Ascending aorta (tissue), 2 donors: ENCODE measurements at regions of chr2 and their contacts with region 1.

Region 1: DNA sequence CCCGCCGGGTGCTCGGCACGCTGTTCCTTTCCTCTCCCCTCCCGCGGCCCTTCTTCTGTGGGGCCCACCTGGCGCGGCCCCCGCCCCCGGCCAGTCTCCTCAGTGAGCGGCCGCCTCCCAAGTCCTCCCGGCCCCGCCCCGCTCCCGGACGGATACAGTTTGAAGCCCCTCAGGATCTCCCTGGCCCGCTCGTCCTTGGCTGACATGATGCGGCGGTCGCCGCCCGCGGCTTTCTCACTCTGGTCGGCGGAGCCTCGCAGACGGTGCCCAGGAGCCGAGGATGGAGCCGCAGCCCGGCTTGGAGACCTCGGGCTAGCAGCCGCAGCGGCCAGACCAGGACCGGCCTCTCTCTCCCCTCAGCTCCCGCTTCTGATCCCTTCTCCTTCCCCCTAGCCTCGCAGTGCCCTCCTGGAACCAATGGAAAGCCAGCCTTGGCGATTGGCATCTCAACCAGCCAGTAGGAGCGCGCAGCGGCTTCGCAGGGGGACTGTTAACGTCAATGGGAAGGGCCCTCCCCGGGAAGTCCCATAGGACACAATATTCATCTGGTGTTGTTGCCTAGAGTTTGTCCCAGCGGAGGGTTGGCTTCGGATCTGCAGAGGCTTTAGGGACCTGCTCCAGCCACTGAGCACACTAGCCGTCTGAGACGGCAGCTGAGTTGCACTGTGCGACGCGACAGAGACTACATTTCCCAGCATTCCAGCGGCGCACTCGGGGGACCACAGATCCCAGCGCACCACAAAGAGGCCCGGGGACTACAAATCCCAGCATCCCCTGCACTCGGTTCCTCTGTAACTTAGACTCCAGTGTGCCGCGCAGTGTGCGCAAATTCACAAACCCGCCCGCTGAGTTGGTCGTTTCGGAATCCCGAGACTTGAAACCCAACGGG is at the start of gene PDE6D:
- DNase-seq: peak; percentile 96 to 99
- H3K4me3 ChIP-seq: peak within 1 kb of the TSS; percentile 68 to 94
- H3K27ac ChIP-seq: peak within 1 kb of the TSS; percentile 83 to 85
- H3K4me1 ChIP-seq: peaks cover 4 to 29% of the 10 kb centered on the region in 2 donors
- H3K27me3 ChIP-seq: no peaks in the 10 kb centered on the region
- CTCF ChIP-seq: no peak
- total RNA-seq, gene PDE6D: 34.1 TPM

Region 2: DNA sequence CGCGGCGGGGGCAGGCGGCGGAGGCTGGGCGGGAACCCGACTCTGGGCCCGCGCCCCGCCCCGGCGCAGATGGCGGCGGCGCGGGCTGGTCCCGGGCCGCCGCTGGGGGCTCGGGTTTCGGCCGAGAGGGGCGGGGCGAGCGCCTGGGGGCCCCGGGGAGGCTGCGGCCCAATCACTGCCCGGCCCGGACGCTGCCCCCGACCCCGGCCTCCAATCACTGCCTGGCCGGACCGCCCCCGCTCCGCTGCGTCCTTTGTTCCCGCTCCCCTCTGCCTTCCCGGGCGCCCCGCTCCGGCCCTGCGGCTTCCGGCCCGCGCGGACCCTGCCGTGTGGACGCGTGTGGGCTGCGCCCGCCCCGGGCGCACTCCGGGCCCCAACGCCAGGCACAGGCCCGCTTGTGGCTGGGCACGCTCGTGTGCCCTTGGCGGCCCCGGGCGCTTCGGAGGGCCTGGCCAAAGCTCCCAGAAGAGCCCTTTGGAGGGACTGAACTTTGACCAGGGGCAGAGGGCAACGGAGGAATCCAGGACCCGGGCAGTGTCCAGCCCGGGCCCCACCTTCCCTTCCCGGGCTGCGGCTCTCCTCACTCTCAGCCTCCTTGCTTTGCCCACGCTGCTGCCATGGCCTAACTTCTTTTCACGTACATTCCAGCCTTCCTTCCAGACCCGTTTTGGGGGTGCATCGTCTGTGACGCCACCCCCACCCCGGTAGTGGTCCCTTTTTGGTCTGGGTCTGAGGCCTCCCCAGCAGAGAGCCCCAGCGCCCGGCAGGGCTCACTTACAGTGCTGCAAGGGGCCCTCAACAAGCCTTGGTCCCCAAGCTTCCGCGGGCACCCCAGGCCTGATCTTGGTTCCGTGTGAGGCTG is 99.9 kb before region 1 on chr2:
- intact Hi-C with region 1: loop called (anchors 1 kb)
- DNase-seq: peak in 1 of 2 donors; percentile 90
- H3K4me3 ChIP-seq: peak overlapping the region; percentile 54 to 64
- H3K27ac ChIP-seq: peak overlapping the region; percentile 84 to 92
- H3K4me1 ChIP-seq: peaks cover 0 to 7% of the 10 kb centered on the region in 2 donors
- H3K27me3 ChIP-seq: no peaks in the 10 kb centered on the region
- CTCF ChIP-seq: no peak

Region 3: DNA sequence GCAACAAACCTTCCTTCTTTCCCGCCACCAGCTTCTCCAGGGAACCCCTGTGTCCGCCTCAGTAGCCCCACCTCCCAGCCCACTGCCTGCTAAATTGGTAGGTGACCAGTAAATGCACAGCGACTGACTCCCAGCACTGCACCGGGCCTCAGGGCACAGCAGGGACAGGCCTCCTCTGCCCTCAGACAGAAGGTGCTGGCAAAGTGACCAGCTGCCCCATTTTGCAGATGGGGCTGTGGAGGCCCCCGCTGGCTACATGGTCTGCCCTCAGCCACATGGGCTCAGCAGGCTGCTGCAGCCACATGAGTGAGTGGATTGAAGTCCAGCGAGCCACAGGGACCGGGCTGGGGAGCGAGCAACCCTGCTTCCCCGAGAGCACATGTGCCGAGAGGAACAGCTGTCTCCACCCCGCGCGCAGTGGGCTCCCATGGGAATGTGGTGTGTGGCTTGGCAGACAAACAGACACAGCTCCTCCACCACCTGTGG is 152.8 kb after region 1 on chr2:
- intact Hi-C with region 1: no loop called
- DNase-seq: peak in 1 of 2 donors; percentile 44
- H3K4me3 ChIP-seq: no peak overlapping the region
- H3K27ac ChIP-seq: no peak overlapping the region
- H3K4me1 ChIP-seq: no peaks in the 10 kb centered on the region
- H3K27me3 ChIP-seq: no peaks in the 10 kb centered on the region
- CTCF ChIP-seq: no peak

Region 4: GRCh38 chr2:231961349-231962166 is 180.4 kb after region 1 on chr2 and contains the start of gene DIS3L2:
- intact Hi-C with region 1: loop called (anchors 2 kb)
- DNase-seq: peak; percentile 14 to 89
- H3K4me3 ChIP-seq: peak within 1 kb of the TSS; percentile 87 to 91
- H3K27ac ChIP-seq: peak within 1 kb of the TSS; percentile 74 to 78
- H3K4me1 ChIP-seq: peaks cover 5 to 14% of the 10 kb centered on the region in 2 donors
- H3K27me3 ChIP-seq: no peaks in the 10 kb centered on the region
- CTCF ChIP-seq: no peak
- total RNA-seq, gene DIS3L2: 20.6 TPM

Region 5: GRCh38 chr2:232550354-232551249 is 769.4 kb after region 1 on chr2 and contains the starts of genes EIF4E2 and TIGD1:
- intact Hi-C with region 1: loop called (anchors 5 kb)
- DNase-seq: peak; percentile 67 to 97
- H3K4me3 ChIP-seq: peak within 1 kb of the TSS; percentile 84 to 100
- H3K27ac ChIP-seq: peak within 1 kb of the TSS; percentile 97 to 100
- H3K4me1 ChIP-seq: peaks cover 4 to 5% of the 10 kb centered on the region in 2 donors
- H3K27me3 ChIP-seq: no peaks in the 10 kb centered on the region
- CTCF ChIP-seq: peak; percentile 31 to 45 (median 34)
- total RNA-seq, gene EIF4E2: 16.7 TPM
- total RNA-seq, gene TIGD1: 0.53 TPM